HEK293T (cell line): ENCODE measurements at regions of chr17 and their contacts with region 1.

Region 1: DNA sequence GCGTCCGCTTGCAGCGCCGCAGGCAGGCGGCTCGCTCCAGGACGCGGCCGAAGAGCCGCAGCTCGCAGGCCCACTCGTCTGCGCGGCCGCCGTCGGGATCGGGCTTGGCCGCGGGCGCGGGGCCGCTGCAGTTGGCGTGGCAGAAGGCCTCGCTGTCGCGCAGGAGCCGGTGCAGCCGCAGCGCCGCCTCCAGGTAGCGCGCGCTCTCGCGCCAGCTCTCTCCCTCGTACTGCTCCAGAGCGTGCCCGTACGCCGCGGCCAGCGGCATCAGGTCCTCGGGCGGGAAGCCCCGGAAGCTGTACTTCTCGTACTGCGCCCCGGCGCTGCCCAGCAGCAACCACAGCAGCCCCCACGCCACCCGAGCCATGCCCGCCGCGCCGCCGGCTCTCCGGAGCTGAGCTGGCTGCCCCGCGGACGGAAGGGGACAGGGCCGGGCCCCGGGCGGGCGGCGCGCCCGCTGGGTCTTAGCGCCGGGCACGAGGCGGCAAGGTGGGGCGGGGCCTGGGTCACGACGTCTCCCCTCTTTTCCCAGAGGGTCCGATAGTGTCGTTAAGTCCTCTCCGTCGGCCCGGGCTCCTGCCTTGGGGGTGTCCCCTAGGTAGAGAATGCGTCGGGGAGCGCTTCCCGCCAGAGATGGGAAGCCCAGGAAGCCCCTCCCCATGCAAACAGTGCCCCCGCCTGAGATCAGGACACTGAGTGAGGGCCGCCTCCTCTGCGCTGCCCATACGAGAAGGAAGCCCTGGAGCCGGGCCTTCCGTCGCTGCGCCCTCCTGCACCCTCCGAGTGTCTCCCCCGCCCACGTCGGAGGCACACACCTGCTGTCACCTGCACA is at the start of gene P3H4:
- DNase-seq: peak; percentile 84

Region 2: GRCh38 chr17:41464682-41465081 is 347.1 kb before region 1 on chr17:
- CTCF ChIA-PET with region 1: no interaction called
- POLR2A ChIA-PET with region 1: no interaction called
- DNase-seq: no peak

Region 3: DNA sequence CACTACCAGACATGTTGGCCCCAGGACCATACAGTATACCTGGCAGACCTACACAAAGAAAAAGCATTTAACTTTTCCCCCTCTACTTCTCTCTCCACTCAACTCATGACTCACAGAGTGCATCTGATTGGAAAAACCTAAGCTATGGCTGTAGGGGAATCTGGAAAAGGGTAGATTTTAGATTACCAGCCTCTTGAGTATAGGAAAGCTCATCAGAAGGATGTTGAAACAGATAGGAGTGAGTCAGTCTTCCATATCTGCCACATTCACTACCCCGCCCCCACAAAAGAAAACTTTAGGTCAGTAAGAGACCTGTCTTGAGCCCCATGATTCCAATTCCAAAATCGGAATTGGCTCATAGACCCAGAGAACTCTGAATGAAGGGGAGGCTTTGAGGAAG is 252.2 kb before region 1 on chr17:
- CTCF ChIA-PET with region 1: no interaction called
- POLR2A ChIA-PET with region 1: no interaction called
- DNase-seq: no peak

Region 4: GRCh38 chr17:41738077-41738735 is 73.6 kb before region 1 on chr17:
- CTCF ChIA-PET with region 1: interaction called, 15 read pairs
- POLR2A ChIA-PET with region 1: interaction called, 15 read pairs
- DNase-seq: peak; percentile 90

Region 5: GRCh38 chr17:41786227-41787020 is 25.3 kb before region 1 on chr17 and contains the start of gene JUP:
- CTCF ChIA-PET with region 1: interaction called, 6 read pairs
- POLR2A ChIA-PET with region 1: interaction called, 31 read pairs
- DNase-seq: peak; percentile 100

Region 6: GRCh38 chr17:41824086-41824485 is 12.3 kb after region 1 on chr17:
- CTCF ChIA-PET with region 1: interaction called, 3 read pairs
- POLR2A ChIA-PET with region 1: interaction called, 29 read pairs
- DNase-seq: no peak

Region 7: GRCh38 chr17:41864836-41865595 is 53.3 kb after region 1 on chr17 and contains the start of gene KLHL11:
- CTCF ChIA-PET with region 1: no interaction called
- POLR2A ChIA-PET with region 1: interaction called, 36 read pairs
- DNase-seq: peak; percentile 96

Region 8: GRCh38 chr17:41907185-41907556 is 95.4 kb after region 1 on chr17:
- CTCF ChIA-PET with region 1: no interaction called
- POLR2A ChIA-PET with region 1: no interaction called
- DNase-seq: no peak

Region 9: DNA sequence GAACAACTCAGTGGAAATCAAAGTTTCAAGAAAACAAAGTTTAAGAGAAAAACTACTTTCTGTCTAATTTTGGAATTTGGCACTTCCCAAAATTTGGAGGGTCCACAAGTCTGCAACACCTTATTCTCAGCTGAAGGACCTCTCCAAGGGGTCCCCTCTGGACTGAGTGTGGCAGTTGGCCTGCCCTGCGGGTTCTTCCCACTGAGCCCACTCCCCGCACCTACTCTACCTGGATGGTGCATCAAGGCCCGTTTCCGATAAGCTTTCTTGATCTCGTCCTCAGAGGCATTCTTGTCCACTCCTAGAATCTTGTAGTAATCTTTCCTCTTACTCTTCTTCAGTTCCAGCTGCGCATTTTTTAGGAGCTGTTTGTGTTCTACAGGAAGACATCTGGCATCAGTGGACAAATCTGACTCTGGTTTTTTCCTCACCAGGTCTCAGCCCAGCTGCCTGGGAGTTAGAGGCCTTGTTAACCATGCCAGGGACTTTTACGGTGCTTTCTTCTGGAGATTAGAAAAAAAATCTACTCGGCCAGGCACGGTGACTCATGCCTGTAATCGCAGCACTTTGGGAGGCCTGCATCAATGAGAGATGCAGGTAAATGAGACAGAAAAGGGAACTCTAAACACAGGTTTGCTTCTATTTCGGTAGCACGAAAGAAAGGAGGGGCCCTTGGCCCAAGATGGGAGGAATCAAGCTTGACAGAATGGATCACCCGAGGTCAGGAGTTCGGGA is 170.4 kb after region 1 on chr17:
- CTCF ChIA-PET with region 1: no interaction called
- POLR2A ChIA-PET with region 1: no interaction called
- DNase-seq: no peak